ENCODE measurements at regions of chr11 and their contacts with region 1.

Region 1: GRCh38 chr11:30855383-30856006 is 269.3 kb upstream of the MPPED2 start:
- DNase-seq: no peak

Region 2: DNA sequence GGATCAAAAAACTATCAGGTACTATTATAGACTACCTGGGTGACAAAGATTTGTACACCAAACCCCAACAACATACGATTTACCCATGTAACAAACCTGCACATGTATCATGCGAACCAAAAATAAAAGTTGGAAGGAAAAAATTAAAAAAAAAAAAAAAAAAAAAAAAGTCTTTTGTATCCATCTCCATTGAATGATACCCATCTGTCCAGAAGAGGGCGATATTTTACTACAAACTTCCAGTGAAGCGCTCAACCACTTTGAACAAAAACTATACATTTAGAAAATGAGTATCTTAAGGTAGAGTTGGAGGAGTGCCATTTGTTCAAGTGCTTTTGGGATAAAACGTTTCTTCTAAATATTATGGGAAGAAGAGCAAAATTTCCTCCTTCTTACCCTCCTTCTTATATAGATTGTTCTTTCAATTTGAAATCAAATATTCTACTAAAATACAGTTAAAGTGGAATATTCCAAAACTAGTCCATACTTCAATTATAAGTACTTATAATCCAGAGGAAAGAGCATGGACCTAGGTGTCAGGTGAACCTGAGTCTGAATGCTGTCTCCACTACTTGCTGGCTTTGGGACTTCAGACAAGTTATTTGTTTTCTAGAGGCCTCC is 509.3 kb before region 1 on chr11:
- intact Hi-C with region 1: loop called (anchors 5 kb)
- DNase-seq: no peak

Region 3: DNA sequence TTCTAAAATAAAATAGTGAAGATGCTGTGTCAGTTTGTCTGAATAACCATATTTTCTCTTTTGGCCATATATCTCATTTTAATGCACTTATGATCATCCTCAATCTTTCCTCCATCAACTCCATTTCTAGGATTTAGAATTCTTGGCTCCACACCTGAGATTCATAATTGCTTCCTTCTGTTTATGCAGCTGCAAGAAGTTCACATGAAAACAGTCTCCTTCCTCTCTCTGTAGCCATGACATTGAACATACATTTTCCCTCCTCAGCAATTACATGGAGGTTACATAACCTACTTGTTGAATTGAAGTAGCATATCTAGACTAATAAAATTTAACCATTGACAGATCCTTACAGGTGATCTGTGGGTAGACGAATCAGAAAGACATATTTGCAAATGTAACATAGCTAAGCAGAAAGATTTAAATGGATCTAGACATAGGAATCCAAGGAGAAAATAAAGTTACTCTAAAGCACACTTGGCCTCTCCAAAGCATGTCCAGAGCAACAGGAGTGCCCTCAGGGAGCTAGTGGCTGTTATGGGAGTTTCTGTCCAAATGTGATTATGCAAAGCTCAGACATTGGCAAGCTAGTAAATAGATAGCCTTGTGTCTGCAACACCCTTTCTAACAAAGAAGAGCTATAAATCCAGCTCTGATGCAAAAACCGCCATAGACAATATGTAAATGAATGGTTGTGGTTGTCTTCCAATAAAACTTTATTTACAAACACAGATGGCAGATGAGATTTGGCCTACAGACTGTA is 149.4 kb before region 1 on chr11:
- intact Hi-C with region 1: no loop called
- DNase-seq: no peak

Measured in posterior cingulate gyrus (tissue), 11 donors.